ENCODE measurements at regions of chr19 and their contacts with region 1.

Region 1: DNA sequence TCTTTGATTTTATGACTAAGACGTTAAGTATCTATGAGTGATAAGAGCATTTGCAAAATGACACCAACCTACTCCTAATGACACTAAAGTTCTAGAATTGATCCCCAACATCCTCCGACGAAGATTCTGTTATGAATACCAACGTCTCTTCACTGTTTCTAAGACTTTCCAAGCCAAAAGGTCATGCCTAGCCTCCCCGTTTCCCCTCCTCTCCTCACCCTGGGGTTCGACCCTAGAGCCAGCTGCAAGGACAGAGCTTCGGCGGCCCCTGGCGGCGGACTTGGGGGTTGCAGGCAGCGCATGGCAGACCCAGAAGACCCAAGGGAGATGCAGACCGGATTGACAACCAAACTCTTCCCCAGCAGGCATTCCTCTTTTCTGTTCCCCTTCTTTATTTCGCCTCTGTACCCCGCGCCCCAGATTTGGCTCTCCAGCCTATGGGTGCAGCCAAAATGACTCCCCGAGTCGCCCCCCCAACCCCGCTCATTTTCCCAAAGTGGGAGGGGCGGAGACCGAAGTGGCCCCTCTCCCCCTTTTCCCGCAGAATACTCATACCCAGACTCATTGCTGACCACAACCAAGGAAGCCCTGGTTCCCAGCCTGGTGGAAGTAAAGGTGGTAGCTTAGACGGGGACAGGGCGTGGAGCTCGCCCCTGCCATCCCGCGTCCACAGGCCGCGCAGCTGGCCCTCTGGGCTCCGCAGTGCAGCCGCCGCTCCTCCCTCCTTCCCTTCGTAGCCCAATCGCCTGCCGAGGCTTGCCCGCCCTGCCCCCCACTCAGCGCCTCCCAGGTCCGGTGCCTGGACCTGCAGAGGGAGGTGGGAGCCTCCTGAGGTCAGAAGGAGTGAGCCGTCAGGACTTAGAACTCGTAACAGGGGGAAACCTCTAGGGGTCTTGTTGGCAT is 4.1 kb upstream of the EML2 start:
- DNase-seq: peak; percentile 71
- H3K4me3 ChIP-seq: peak overlapping the region in 2 of 3 experiments; percentile 33
- H3K27ac ChIP-seq: peak overlapping the region; percentile 1
- H3K4me1 ChIP-seq: peaks cover 38% of the 10 kb centered on the region
- H3K27me3 ChIP-seq: no peaks in the 10 kb centered on the region
- CTCF ChIP-seq: peak; percentile 98

Region 2: DNA sequence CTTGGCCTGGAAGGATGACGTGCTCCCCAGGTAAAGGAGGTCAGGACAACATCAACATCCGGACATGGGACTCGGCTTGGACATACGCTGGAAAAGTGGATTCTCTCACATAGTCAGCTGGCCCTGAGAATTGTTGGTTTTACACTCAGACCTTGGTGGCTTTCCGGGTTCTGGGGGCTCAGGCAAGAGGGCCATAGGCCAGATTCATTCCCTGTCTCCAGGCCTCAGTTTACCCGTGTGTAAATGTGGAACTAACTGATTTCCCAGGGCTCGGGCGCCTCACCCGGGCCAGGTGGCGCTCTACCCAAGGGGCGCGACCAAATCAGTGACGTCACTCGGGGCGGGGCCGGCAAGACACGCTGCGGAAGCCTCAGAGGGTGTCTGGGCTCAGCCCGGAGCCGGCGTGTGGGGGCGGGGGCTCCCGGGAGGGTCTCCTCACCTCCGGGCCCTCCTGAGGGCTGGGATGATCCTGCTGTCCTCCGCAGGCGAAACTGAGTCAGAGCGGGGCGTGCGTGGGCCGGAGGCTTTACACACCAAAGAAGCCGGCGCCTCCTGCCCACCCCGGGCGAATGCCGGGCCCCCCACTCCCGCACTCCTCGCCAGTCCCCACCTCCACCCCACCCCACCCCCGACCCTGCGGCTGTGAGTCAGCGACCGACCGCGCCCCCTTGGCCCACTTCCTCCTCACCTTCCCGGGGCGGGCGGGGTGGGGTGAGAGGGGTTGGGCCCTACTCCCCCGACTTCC is 136.9 kb before region 1 on chr19:
- CTCF ChIA-PET with region 1: no interaction called
- dilution Hi-C with region 1: loop called (anchors 5 kb)
- in situ Hi-C with region 1: no loop called
- intact Hi-C with region 1: loop called (anchors 5 kb)
- DNase-seq: peak; percentile 94
- H3K4me3 ChIP-seq: peak overlapping the region; percentile 78 to 95 (median 90)
- H3K27ac ChIP-seq: peak overlapping the region; percentile 90
- H3K4me1 ChIP-seq: peaks cover 17% of the 10 kb centered on the region
- H3K27me3 ChIP-seq: no peaks in the 10 kb centered on the region
- CTCF ChIP-seq: peak; percentile 17 to 69

Region 3: GRCh38 chr19:45547976-45548609 is 95.2 kb before region 1 on chr19:
- CTCF ChIA-PET with region 1: no interaction called
- dilution Hi-C with region 1: no loop called
- in situ Hi-C with region 1: no loop called
- intact Hi-C with region 1: no loop called
- DNase-seq: peak; percentile 94
- H3K4me3 ChIP-seq: no peak overlapping the region
- H3K27ac ChIP-seq: peak overlapping the region; percentile 70
- H3K4me1 ChIP-seq: peaks cover 32% of the 10 kb centered on the region
- H3K27me3 ChIP-seq: no peaks in the 10 kb centered on the region
- CTCF ChIP-seq: no peak

Region 4: DNA sequence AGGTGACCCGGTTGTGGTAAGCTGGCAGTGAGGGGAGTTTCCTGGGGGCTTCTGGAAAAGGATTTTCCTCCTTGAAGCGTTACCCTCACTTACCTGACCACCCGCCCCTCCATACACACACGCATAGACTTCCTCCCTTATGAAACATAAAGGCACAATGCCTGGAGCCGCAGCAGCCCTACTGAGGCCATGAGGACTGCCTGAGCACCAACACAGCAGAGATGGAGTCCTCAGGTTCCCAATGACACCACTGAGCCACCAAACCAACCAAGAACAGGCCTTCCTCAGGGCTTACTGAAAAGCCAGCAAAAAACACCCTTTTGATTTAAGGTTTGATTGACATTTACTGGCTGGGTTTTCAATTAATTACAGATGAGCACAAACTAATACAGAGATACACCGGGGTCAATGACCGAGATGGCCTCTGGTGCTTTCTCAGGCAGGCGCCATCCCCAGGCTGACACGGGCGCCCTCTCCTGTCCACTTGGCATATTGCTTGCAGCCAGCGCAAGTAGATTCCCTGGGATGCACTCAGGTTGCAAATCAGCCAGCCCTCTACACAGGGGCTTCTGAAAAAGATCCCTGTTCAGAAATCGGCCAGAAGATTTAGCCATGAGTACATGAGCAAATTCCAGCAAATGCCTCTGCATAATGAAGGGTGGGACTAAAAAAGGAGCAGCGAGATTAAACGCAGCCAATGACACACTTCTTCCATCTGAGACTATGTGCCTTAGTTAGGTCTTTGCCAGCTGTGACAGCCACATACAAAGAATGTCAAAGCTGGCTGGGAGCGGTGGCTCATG is 73.5 kb before region 1 on chr19:
- CTCF ChIA-PET with region 1: no interaction called
- dilution Hi-C with region 1: no loop called
- in situ Hi-C with region 1: no loop called
- intact Hi-C with region 1: loop called (anchors 1 kb)
- DNase-seq: no peak
- H3K4me3 ChIP-seq: no peak overlapping the region
- H3K27ac ChIP-seq: peak overlapping the region; percentile 79
- H3K4me1 ChIP-seq: peaks cover 28% of the 10 kb centered on the region
- H3K27me3 ChIP-seq: no peaks in the 10 kb centered on the region
- CTCF ChIP-seq: peak; percentile 78 to 79

Region 5: GRCh38 chr19:45607071-45608029 is 35.9 kb before region 1 on chr19:
- CTCF ChIA-PET with region 1: interaction called, 20 read pairs
- dilution Hi-C with region 1: no loop called
- in situ Hi-C with region 1: no loop called
- intact Hi-C with region 1: loop called (anchors 1 kb)
- DNase-seq: peak; percentile 48
- H3K4me3 ChIP-seq: peak overlapping the region in 1 of 3 experiments; percentile 28
- H3K27ac ChIP-seq: no peak overlapping the region
- H3K4me1 ChIP-seq: peaks cover 6% of the 10 kb centered on the region
- H3K27me3 ChIP-seq: no peaks in the 10 kb centered on the region
- CTCF ChIP-seq: peak; percentile 71 to 94

Region 6: GRCh38 chr19:45681391-45682015 is 38.2 kb after region 1 on chr19:
- CTCF ChIA-PET with region 1: no interaction called
- dilution Hi-C with region 1: no loop called
- in situ Hi-C with region 1: no loop called
- intact Hi-C with region 1: loop called (anchors 1 kb)
- DNase-seq: peak; percentile 83
- H3K4me3 ChIP-seq: peak overlapping the region in 1 of 3 experiments; percentile 13
- H3K27ac ChIP-seq: no peak overlapping the region
- H3K4me1 ChIP-seq: peaks cover 17% of the 10 kb centered on the region
- H3K27me3 ChIP-seq: no peaks in the 10 kb centered on the region
- CTCF ChIP-seq: peak; percentile 75 to 92